ENCODE measurements at regions of chr2 and their contacts with region 1.

Region 1: GRCh38 chr2:70984576-70985282 is 6.3 kb downstream of the ANKRD53 start:
- DNase-seq: peak; percentile 89
- CTCF ChIP-seq: peak; percentile 91

Region 2: GRCh38 chr2:70964596-70965386 is 19.9 kb before region 1 on chr2:
- CTCF ChIA-PET with region 1: interaction called, 172 read pairs
- POLR2A ChIA-PET with region 1: no interaction called
- DNase-seq: peak; percentile 89
- CTCF ChIP-seq: peak; percentile 97

Region 3: DNA sequence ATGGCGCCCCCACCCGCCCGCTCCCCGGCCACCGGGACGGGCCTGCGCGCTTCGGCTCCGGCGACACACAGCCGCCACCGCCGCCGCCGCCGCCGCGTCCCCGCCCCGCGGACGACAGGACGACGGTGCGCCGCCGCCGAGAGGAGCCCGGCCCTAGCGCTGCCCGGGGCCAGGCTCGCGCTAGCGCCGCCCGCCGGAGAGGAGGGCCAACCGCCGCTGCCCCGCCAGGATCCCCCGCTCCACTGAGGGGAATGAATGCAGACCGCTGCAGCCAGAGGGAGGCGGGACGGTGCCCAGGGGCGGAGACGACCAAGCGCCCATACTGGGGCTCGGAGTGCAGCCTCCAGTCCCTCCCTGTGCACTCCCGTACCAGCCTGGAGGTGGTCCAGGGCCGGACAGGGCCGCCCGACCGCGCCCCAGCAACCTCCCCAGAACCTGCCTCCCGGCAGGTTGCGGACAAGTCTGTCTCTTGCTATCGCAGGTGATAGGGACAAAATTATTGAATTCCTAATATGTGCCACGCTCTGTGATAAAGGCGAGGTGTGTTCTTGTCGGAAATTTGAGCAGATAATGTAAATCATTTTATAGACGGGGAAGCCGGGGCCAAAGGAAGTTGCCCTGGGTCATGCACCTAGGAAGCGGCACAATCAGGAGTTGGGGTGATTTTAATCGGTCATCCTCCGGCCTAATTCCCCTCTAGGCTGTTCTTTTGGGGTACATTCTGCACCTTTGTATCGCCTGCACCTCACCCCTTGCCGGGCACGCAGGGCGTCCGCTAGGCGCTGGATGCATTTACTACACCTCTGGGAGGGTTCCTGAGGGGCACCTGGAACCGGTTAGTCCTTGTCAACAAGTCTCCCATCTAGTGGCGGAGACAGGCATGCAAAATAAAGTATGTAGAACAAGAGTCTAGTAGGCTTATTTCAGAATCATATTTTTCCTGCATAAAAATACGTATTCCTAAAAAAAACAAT is 10.3 kb after region 1 on chr2 and contains the start of gene TEX261:
- CTCF ChIA-PET with region 1: interaction called, 138 read pairs
- POLR2A ChIA-PET with region 1: no interaction called
- DNase-seq: peak; percentile 93
- CTCF ChIP-seq: peak; percentile 97

Region 4: DNA sequence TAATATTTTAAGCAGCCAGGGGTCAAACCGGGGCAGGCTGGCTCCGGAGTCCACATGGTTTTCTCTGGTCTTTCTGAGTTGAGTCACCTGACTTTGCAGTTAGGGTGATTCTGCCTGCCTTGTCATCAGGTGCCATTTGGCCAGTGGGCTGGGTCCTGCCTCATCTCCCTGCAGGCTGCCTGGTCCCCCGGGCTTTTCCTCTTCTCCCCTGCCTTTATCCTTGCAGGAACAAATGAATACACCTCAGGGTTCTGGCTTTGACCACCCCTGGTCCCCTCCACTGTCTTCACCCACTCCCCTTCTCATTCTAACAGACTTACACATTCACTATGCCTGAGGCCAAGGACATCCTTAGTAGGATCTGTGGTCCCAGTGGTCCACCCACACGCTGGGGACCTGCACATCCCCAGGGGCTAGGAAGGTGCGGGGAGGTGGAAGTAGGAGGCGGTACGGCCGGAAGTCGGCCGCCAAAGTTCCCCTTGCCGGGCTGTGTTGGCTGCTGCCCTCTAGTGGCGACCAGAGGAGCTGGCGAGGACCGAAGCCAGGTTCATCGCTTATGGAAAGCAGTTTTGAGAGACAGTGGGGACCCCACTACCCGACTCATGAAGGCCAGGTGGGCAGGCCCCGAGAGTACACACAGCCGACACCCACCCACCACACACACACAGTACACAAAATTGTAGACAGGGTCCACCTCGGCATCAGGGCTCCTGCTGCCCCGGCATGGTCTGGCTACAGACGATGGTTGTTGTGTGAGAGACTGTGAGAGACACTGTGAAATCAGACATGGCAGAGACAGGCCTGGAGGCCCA is 16.3 kb after region 1 on chr2:
- CTCF ChIA-PET with region 1: interaction called, 138 read pairs
- POLR2A ChIA-PET with region 1: no interaction called
- DNase-seq: peak; percentile 87
- CTCF ChIP-seq: peak; percentile 94

Region 5: DNA sequence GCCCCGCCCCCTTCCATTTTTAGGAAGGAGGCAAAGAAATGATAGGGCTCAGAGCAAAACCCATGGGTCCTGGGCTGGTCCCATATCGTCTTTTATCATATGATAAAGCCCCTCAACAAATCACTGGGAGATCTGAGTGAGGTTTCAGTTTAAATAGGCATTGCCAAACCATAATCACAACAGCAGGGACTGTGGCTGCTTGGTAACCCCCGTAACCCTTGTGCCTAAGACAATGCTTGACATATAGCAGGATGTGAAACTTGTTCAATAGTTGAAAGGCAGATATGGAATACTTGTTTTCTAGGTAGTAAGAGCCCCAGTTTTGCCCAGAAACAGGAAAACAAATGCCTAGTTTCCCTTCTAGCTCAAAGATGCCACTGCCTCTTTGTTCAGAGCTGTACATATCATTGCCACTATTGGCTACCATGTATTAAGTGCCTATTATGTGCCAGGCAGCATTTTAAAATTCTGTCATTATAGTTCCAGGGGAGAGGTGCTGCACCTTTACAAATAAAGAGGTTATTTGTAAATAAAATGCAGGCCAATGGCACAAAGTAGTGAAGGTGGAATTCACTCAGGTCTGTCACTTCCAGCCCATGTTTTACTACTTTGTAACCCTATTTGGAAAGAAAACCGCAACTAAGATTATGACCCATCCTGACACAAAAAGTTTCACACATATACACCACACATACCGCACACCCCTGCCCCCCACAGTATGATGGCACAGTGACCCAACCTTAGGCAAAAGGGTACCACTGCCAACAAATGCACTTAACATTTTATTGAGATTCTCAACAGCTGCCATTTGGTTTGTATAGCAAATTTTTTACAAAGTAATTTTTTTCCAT is 97.9 kb after region 1 on chr2:
- CTCF ChIA-PET with region 1: no interaction called
- POLR2A ChIA-PET with region 1: no interaction called
- DNase-seq: no peak
- CTCF ChIP-seq: no peak

Region 6: GRCh38 chr2:71157124-71157793 is 172.5 kb after region 1 on chr2:
- CTCF ChIA-PET with region 1: interaction called, 14 read pairs
- POLR2A ChIA-PET with region 1: no interaction called
- DNase-seq: peak; percentile 63
- CTCF ChIP-seq: peak; percentile 63